Vagina (tissue), 2 donors: ENCODE measurements at regions of chr7 and their contacts with region 1.

Region 1: DNA sequence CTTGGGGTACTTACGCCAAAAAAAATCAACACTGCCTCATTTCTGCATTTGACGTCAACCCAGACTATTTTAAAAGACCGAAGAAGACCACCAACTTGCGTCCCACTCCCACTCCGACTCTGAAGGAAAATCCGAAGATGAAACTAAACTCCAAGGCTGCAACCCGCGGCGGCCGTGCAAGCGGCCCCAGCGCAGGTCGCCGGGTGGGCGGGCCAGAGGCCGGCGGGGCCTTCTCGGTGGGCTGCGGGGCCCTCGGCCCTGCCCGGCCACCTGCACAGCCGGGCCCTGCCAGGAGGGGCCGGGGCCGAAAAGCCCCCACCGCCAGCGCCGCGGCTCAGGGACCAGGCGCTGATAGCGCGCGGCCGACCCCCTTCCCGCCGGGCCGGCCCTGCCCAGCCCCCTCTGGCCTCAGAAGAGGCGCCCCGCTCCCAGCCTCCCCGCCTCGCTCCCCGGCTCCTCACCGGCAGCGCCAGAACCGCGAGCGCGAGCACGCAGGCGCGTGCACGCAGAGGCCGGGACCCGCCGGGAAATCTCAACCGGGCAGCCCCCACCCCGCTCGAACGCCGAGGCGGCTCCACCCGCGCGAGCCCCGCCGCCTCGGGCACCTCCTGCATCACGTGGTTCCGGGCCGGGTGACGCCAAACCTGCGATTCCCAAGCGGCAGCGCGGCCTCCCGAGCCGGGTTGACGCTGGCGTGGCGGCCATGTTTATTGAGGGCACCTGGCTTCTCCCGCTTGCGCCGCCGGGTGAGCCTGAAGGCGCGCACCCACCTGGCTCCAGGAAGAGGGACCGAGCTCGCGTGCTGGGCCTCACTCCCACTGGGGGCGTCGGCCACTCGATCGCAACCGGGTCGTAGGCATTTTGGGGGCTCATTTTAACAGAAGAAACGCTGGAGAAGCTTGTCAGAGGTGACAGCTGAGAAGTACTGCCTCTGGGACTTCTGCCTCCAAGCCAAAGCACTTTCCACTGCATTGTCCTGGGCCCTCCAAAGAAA is at the start of gene C7orf25:
- DNase-seq: peak in 1 of 2 donors; percentile 96
- H3K4me3 ChIP-seq: peak within 1 kb of the TSS; percentile 79 to 81
- H3K27ac ChIP-seq: peak within 1 kb of the TSS; percentile 84
- H3K4me1 ChIP-seq: peaks cover 18% of the 10 kb centered on the region
- H3K27me3 ChIP-seq: no peaks in the 10 kb centered on the region
- CTCF ChIP-seq: peak in 1 of 3 experiments; percentile 11
- POLR2A ChIP-seq: peak in 1 of 2 donors; percentile 36
- total RNA-seq, gene C7orf25: 5.4 TPM

Region 2: DNA sequence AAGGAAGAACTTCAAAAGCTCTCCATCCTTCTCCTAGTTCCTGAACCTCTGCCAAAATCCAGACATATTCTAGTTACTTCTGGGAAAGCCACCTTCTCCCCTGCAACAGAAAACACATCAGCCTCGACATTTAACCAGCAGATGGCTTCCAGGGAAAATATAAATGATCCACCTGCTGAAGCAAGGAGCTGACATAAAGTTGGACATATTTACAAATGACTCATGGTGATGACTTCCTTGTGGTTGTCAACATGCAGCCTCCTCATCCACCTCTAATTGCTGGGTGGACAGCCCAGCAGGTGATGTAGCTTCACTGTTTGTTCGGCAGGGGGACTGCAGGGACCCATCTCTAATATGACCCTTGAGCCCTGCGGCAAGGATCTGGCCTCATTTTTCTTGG is 265.8 kb before region 1 on chr7:
- intact Hi-C with region 1: no loop called
- DNase-seq: no peak
- H3K4me3 ChIP-seq: no peak overlapping the region
- H3K27ac ChIP-seq: no peak overlapping the region
- H3K4me1 ChIP-seq: peaks cover 5% of the 10 kb centered on the region
- H3K27me3 ChIP-seq: no peaks in the 10 kb centered on the region
- CTCF ChIP-seq: no peak
- POLR2A ChIP-seq: no peak

Region 3: GRCh38 chr7:42931834-42932651 is 20.3 kb after region 1 on chr7 and contains the starts of genes MRPL32 and PSMA2:
- intact Hi-C with region 1: loop called (anchors 2 kb)
- DNase-seq: peak in 1 of 2 donors; percentile 97
- H3K4me3 ChIP-seq: peak within 1 kb of the TSS; percentile 60 to 91
- H3K27ac ChIP-seq: peak within 1 kb of the TSS; percentile 79
- H3K4me1 ChIP-seq: peaks cover 69% of the 10 kb centered on the region
- H3K27me3 ChIP-seq: no peaks in the 10 kb centered on the region
- CTCF ChIP-seq: no peak
- POLR2A ChIP-seq: no peak
- total RNA-seq, gene MRPL32: 33.9 TPM
- total RNA-seq, gene PSMA2: 46.9 TPM